Naive thymus-derived CD4-positive, alpha-beta T cell (primary cell): ENCODE measurements at regions of chr12 and their contacts with region 1.

Region 1: GRCh38 chr12:27305673-27306456 is 26.8 kb upstream of the BMAL2 start:
- DNase-seq: peak in 6 of 9 donors; percentile 20 to 48 (median 34)
- ATAC-seq: no peak
- H3K4me3 ChIP-seq: no peak overlapping the region
- H3K4me3 Mint-ChIP-seq: no peak overlapping the region
- H3K27ac ChIP-seq: no peak overlapping the region
- H3K27ac Mint-ChIP-seq: peak overlapping the region in 6 of 9 donors; percentile 1 to 67 (median 16)
- H3K4me1 ChIP-seq: no peaks in the 10 kb centered on the region
- H3K4me1 Mint-ChIP-seq: peaks cover 0 to 15% (median 0%) of the 10 kb centered on the region in 7 donors
- H3K27me3 ChIP-seq: no peaks in the 10 kb centered on the region
- H3K27me3 Mint-ChIP-seq: no peaks in the 10 kb centered on the region

Region 2: GRCh38 chr12:26853303-26854030 is 452.4 kb before region 1 on chr12:
- CTCF ChIA-PET with region 1: interaction called, 5 read pairs
- POLR2A ChIA-PET with region 1: no interaction called
- intact Hi-C with region 1: loop called (anchors 1 to 5 kb)
- DNase-seq: peak; percentile 47 to 73 (median 69)
- ATAC-seq: peak; percentile 95
- H3K4me3 ChIP-seq: no peak overlapping the region
- H3K4me3 Mint-ChIP-seq: no peak overlapping the region
- H3K27ac ChIP-seq: no peak overlapping the region
- H3K27ac Mint-ChIP-seq: peak overlapping the region in 2 of 9 donors; percentile 1 to 81
- H3K4me1 ChIP-seq: no peaks in the 10 kb centered on the region
- H3K4me1 Mint-ChIP-seq: peaks cover 0 to 4% (median 0%) of the 10 kb centered on the region in 7 donors
- H3K27me3 ChIP-seq: no peaks in the 10 kb centered on the region
- H3K27me3 Mint-ChIP-seq: peaks cover 0 to 23% (median 0%) of the 10 kb centered on the region in 5 donors

Region 3: DNA sequence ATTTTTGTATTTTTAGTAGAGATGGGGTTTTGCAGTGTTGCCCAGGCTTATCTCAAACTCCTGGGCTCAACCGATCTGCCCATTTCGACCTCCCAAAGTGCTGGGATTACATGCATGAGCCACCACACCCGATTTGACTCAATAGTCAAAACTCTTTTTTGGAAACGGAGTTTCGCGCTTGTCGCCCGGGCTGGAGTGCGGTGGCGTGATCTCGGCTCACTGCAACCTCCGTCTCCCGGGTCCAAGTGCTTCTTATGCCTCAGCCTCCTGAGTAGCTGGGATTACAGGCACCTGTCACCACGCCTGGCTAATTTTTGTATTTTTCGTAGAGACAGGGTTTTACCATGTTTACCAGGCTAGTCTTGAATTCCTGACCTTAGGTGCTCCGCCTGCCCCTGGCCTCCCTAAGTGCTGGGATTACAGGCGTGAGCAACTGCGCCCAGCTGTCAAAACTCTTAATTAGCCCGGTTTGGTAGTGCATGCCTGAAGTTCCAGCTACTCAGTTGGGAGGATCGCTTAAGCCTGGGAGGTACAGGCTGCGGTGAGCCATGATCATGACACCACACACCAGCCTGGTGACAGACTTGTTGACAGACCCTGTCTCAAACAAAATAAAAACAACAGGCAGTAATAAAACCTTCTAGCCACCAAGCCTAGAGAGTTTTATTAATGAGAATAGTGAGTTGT is 271.1 kb before region 1 on chr12:
- CTCF ChIA-PET with region 1: no interaction called
- POLR2A ChIA-PET with region 1: interaction called, 3 read pairs
- intact Hi-C with region 1: loop called in 1 of 2 experiments (anchors 1 kb)
- DNase-seq: no peak
- ATAC-seq: no peak
- H3K4me3 ChIP-seq: no peak overlapping the region
- H3K4me3 Mint-ChIP-seq: no peak overlapping the region
- H3K27ac ChIP-seq: no peak overlapping the region
- H3K27ac Mint-ChIP-seq: no peak overlapping the region
- H3K4me1 ChIP-seq: no peaks in the 10 kb centered on the region
- H3K4me1 Mint-ChIP-seq: peaks cover 0 to 3% (median 0%) of the 10 kb centered on the region in 7 donors
- H3K27me3 ChIP-seq: no peaks in the 10 kb centered on the region
- H3K27me3 Mint-ChIP-seq: no peaks in the 10 kb centered on the region

Region 4: GRCh38 chr12:27142101-27142721 is 163.7 kb before region 1 on chr12:
- CTCF ChIA-PET with region 1: interaction called, 3 read pairs
- POLR2A ChIA-PET with region 1: no interaction called
- intact Hi-C with region 1: loop called (anchors 1 to 2 kb)
- DNase-seq: peak in 7 of 9 donors; percentile 7 to 32 (median 15)
- ATAC-seq: peak; percentile 80
- H3K4me3 ChIP-seq: no peak overlapping the region
- H3K4me3 Mint-ChIP-seq: no peak overlapping the region
- H3K27ac ChIP-seq: no peak overlapping the region
- H3K27ac Mint-ChIP-seq: no peak overlapping the region
- H3K4me1 ChIP-seq: no peaks in the 10 kb centered on the region
- H3K4me1 Mint-ChIP-seq: peaks cover 1 to 30% (median 11%) of the 10 kb centered on the region in 7 donors
- H3K27me3 ChIP-seq: no peaks in the 10 kb centered on the region
- H3K27me3 Mint-ChIP-seq: peaks cover 0 to 5% (median 0%) of the 10 kb centered on the region in 5 donors

Region 5: GRCh38 chr12:27332407-27333301 is 26.8 kb after region 1 on chr12 and contains the start of gene BMAL2:
- CTCF ChIA-PET with region 1: no interaction called
- POLR2A ChIA-PET with region 1: no interaction called
- intact Hi-C with region 1: loop called in 1 of 2 experiments (anchors 2 kb)
- DNase-seq: peak in 8 of 9 donors; percentile 12 to 70 (median 16)
- ATAC-seq: peak; percentile 62
- H3K4me3 ChIP-seq: peak within 1 kb of the TSS; percentile 46
- H3K4me3 Mint-ChIP-seq: peak within 1 kb of the TSS; percentile 80 to 97 (median 88)
- H3K27ac ChIP-seq: no peak within 1 kb of the TSS
- H3K27ac Mint-ChIP-seq: peak within 1 kb of the TSS in 1 of 9 donors; percentile 94
- H3K4me1 ChIP-seq: peaks cover 4% of the 10 kb centered on the region in 2 donors
- H3K4me1 Mint-ChIP-seq: peaks cover 7 to 51% (median 15%) of the 10 kb centered on the region in 7 donors
- H3K27me3 ChIP-seq: peaks cover 0 to 8% of the 10 kb centered on the region in 2 donors
- H3K27me3 Mint-ChIP-seq: peaks cover 7 to 48% (median 46%) of the 10 kb centered on the region in 5 donors
- total RNA-seq, gene BMAL2: 0.19 to 37.7 (median 0.41) TPM in 4 of 5 experiments, not detected in the other